ENCODE measurements at regions of chr10 and their contacts with region 1.

Region 1: GRCh38 chr10:112183329-112184051 is at the start of gene GPAM:
- DNase-seq: peak; percentile 94
- H3K4me3 ChIP-seq: peak within 1 kb of the TSS; percentile 86
- H3K27ac ChIP-seq: peak within 1 kb of the TSS; percentile 71
- H3K4me1 ChIP-seq: peaks cover 7% of the 10 kb centered on the region
- H3K27me3 ChIP-seq: no peaks in the 10 kb centered on the region
- CTCF ChIP-seq: no peak
- total RNA-seq, gene GPAM: 18.1 and 20.8 TPM in 2 replicates

Region 2: DNA sequence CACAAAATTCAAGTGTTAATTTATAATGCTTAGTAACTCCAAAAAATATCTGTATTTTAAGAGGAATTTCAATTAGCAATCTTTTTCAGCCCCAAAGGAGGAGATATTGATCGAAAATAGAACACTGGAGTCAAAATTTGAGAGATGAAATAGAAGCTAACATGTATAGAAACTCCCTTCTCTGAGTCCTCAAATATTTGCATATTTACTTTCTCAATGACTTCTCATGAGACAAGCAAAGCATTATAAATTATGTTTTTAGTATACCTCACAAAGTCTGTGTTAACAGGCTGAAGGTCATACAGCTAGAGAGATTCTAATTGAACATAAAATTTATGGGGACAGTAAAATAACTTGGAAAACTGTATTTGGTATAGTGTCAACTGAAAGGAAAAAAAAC is 260.5 kb before region 1 on chr10:
- CTCF ChIA-PET with region 1: no interaction called
- POLR2A ChIA-PET with region 1: no interaction called
- intact Hi-C with region 1: no loop called
- DNase-seq: no peak
- H3K4me3 ChIP-seq: no peak overlapping the region
- H3K27ac ChIP-seq: no peak overlapping the region
- H3K4me1 ChIP-seq: no peaks in the 10 kb centered on the region
- H3K27me3 ChIP-seq: peaks cover 11% of the 10 kb centered on the region
- CTCF ChIP-seq: no peak

Region 3: GRCh38 chr10:111996103-111996502 is 187.4 kb before region 1 on chr10:
- CTCF ChIA-PET with region 1: no interaction called
- POLR2A ChIA-PET with region 1: no interaction called
- intact Hi-C with region 1: no loop called
- DNase-seq: no peak
- H3K4me3 ChIP-seq: no peak overlapping the region
- H3K27ac ChIP-seq: no peak overlapping the region
- H3K4me1 ChIP-seq: no peaks in the 10 kb centered on the region
- H3K27me3 ChIP-seq: peaks cover 3% of the 10 kb centered on the region
- CTCF ChIP-seq: no peak

Region 4: DNA sequence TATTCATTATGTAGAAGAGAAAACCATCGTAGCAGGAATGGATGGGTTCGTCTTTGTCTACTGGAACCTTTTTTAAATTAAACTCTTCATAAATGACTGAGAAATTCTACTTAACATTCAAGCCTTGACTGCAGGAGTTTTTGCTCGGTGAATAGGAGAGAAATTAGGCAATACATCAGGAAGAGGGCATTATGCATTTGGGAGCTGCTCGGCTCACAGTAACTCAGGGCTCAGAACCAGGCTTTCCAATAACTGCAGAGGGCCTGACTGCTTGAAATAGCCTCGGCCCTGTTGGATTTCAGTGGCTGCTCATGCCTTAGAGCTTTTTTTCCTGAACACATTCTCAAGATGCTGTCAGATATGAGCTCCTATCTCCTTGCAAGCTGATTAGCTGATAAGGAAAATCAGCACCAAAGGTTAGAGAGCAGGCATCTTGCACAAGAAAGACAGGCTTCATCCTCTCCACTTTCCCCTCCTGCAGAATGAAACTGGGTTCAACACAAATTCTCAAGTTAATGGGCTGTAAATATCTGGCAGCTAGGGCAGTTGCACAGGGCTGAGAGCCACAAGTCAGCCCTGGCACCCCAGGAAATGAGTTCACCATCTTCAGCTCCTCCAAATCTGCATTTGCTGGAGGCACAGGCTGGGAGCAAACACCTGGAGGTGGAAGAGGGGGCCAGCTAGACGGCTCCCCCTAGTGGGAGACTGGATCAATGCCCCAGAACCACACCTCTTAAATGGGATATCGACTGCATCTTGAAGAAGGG is 124.1 kb after region 1 on chr10:
- CTCF ChIA-PET with region 1: no interaction called
- POLR2A ChIA-PET with region 1: no interaction called
- intact Hi-C with region 1: loop called (anchors 10 kb)
- DNase-seq: peak; percentile 41
- H3K4me3 ChIP-seq: no peak overlapping the region
- H3K27ac ChIP-seq: no peak overlapping the region
- H3K4me1 ChIP-seq: no peaks in the 10 kb centered on the region
- H3K27me3 ChIP-seq: peaks cover 39% of the 10 kb centered on the region
- CTCF ChIP-seq: peak; percentile 79

Region 5: DNA sequence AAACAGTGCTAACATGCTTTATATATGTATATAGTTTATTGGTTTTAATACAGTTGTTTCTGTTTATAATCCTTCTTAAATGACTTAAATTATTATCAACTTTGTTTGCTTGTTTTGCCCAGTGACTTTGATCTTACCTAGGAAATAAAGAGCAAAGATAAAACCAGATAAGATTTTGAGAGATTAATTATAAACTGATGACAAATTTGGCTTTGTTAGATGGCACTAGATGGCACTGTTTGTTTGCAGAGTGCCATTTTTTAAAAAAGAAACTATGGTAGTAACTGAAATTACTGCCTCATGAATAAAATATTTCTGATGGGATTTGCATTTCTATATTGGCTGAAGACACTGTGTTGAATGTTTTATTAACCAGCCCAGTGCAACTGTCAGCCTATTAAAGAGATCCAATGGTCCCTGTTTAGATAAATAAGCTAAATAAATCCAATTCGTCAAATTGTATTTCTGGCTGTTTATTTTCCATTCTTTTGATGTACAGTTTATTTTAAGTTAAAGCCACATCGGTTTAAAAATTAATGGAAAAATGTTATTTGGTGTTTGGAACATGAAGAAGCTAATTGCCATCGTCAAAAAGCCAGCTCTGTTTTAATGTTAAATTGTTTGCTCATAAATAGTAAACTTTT is 292.2 kb after region 1 on chr10:
- CTCF ChIA-PET with region 1: no interaction called
- POLR2A ChIA-PET with region 1: no interaction called
- intact Hi-C with region 1: no loop called
- DNase-seq: peak; percentile 64
- H3K4me3 ChIP-seq: no peak overlapping the region
- H3K27ac ChIP-seq: no peak overlapping the region
- H3K4me1 ChIP-seq: peaks cover 6% of the 10 kb centered on the region
- H3K27me3 ChIP-seq: no peaks in the 10 kb centered on the region
- CTCF ChIP-seq: peak; percentile 70